Activated CD4-positive, alpha-beta T cell treated with anti-CD3 and anti-CD28 coated beads for 36 hours (primary cell): ENCODE measurements at regions of chrX and their contacts with region 1.

Region 1: DNA sequence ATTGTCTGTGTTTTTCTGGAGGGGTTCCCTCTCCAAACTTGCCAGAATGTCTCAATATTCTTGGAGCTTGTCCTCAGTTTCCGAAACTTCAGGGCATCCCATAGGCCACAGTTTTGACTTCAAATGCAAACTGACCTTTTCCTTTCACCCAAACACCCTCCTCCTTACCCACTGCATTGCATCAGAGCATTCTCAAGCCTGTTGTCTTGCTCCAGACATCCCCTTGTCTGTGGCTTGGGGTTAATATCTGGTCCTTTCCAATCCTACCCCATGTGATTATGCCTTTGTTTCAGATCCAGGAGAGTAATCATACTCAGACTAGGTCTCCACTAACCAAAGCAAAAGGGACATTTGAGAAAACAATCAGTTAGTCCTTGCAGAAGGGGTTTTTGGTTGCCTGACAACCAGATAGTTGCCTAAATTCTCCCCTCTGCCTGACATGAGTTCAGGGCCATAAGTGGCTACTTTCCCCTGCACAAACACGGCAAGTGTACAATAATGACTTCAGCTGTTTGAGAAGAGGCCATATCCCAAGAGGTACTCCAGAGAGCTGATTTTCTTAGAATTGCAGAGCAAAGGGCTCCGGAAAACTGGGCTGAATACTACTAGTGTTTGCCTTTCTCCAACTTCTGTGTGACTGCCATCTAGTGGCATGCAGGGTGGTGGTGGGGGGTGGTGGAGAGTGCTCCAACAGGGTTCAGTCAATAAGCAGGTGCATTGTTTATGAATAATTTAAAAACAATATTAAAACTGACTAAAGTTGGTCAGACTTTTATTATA is 130.2 kb downstream of the CHRDL1 start:
- DNase-seq: peak; percentile 38
- ATAC-seq: no peak
- H3K4me3 Mint-ChIP-seq: no peak overlapping the region
- H3K27ac Mint-ChIP-seq: no peak overlapping the region
- H3K4me1 Mint-ChIP-seq: no peaks in the 10 kb centered on the region
- H3K27me3 Mint-ChIP-seq: no peaks in the 10 kb centered on the region

Region 2: DNA sequence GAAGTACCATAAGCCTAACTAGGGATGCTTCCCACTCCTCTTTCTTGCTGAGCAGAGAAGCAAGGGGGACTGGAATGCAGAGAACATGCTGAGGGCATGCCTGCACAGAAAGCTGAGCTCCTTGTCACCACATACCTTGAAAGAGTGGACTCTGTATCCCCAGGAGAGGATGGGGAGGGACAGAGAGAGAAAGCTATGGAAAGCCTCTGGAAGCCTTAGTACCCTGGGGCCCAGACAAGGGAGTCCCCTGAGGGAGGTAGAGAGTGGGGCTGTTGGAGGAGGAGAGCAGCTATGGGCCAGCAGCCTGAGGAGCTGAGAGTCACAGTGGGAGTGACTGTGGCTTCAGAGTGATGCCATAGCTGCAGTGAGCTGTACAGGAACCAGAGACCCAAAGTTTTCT is 228.9 kb before region 1 on chrX:
- CTCF ChIA-PET with region 1: no interaction called
- POLR2A ChIA-PET with region 1: no interaction called
- intact Hi-C with region 1: no loop called
- DNase-seq: no peak
- ATAC-seq: no peak
- H3K4me3 Mint-ChIP-seq: no peak overlapping the region
- H3K27ac Mint-ChIP-seq: no peak overlapping the region
- H3K4me1 Mint-ChIP-seq: no peaks in the 10 kb centered on the region
- H3K27me3 Mint-ChIP-seq: peaks cover 4% of the 10 kb centered on the region

Region 3: GRCh38 chrX:110450050-110450449 is 215.4 kb before region 1 on chrX:
- CTCF ChIA-PET with region 1: no interaction called
- POLR2A ChIA-PET with region 1: no interaction called
- intact Hi-C with region 1: loop called (anchors 2 to 10 kb)
- DNase-seq: peak; percentile 71
- ATAC-seq: peak; percentile 85
- H3K4me3 Mint-ChIP-seq: no peak overlapping the region
- H3K27ac Mint-ChIP-seq: no peak overlapping the region
- H3K4me1 Mint-ChIP-seq: no peaks in the 10 kb centered on the region
- H3K27me3 Mint-ChIP-seq: no peaks in the 10 kb centered on the region

Region 4: DNA sequence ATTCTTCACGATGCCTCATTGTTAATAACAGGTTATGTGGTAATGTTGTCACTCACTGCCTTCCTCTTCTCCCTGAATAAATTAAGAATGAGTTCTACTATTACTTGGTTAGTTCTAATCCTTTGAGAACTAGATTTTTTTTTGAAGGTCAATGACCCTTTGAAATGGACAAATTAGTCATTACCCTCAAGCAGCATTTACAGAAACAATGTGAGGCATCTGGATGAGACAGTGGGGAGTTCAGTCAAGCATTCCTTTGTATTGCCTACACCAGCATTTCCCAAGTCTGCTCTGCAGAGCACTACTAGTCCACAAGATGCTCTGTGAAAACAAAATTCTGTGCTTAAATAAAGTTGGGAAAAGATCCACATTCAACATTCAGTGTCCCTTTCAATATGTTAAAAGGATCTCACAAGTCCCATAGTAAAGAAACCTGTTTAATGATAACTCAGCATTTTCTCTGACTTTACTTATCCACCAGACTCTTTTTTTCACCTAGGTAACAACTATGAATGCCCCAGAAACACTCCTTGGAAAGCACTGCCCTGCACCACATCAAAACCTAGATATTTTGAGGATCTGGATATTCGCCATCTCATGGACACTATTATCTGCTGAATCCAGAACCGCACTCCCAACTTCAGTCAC is 69.6 kb after region 1 on chrX:
- CTCF ChIA-PET with region 1: no interaction called
- POLR2A ChIA-PET with region 1: no interaction called
- intact Hi-C with region 1: no loop called
- DNase-seq: no peak
- ATAC-seq: no peak
- H3K4me3 Mint-ChIP-seq: no peak overlapping the region
- H3K27ac Mint-ChIP-seq: no peak overlapping the region
- H3K4me1 Mint-ChIP-seq: no peaks in the 10 kb centered on the region
- H3K27me3 Mint-ChIP-seq: no peaks in the 10 kb centered on the region